CD8-positive, alpha-beta memory T cell (primary cell): ENCODE measurements at regions of chr22 and their contacts with region 1.

Region 1: GRCh38 chr22:41925655-41926460 is 748 bp downstream of the TNFRSF13C start:
- DNase-seq: peak; percentile 75 to 86 (median 78)
- H3K4me3 ChIP-seq: peak overlapping the region; percentile 34
- H3K4me3 Mint-ChIP-seq: peak overlapping the region; percentile 82 to 91 (median 85)
- H3K27ac ChIP-seq: no peak overlapping the region
- H3K27ac Mint-ChIP-seq: peak overlapping the region in 6 of 8 donors; percentile 65 to 87 (median 78)
- H3K4me1 ChIP-seq: peaks cover 10% of the 10 kb centered on the region
- H3K4me1 Mint-ChIP-seq: peaks cover 4 to 34% (median 9%) of the 10 kb centered on the region in 3 donors
- H3K27me3 ChIP-seq: no peaks in the 10 kb centered on the region
- H3K27me3 Mint-ChIP-seq: peaks cover 3 to 6% of the 10 kb centered on the region in 2 donors

Region 2: GRCh38 chr22:41910050-41911000 is 15.5 kb before region 1 on chr22:
- CTCF ChIA-PET with region 1: interaction called, 18 read pairs
- POLR2A ChIA-PET with region 1: interaction called, 5 read pairs
- DNase-seq: peak in 4 of 5 donors; percentile 14 to 62 (median 36)
- H3K4me3 ChIP-seq: no peak overlapping the region
- H3K4me3 Mint-ChIP-seq: peak overlapping the region in 6 of 7 donors; percentile 40 to 71 (median 50)
- H3K27ac ChIP-seq: no peak overlapping the region
- H3K27ac Mint-ChIP-seq: peak overlapping the region in 2 of 8 donors; percentile 38 to 65
- H3K4me1 ChIP-seq: peaks cover 30% of the 10 kb centered on the region
- H3K4me1 Mint-ChIP-seq: peaks cover 23 to 39% (median 27%) of the 10 kb centered on the region in 3 donors
- H3K27me3 ChIP-seq: peaks cover 36% of the 10 kb centered on the region
- H3K27me3 Mint-ChIP-seq: peaks cover 15 to 24% of the 10 kb centered on the region in 2 donors

Region 3: GRCh38 chr22:41963453-41964111 is 37.7 kb after region 1 on chr22:
- CTCF ChIA-PET with region 1: no interaction called
- POLR2A ChIA-PET with region 1: no interaction called
- DNase-seq: no peak
- H3K4me3 ChIP-seq: no peak overlapping the region
- H3K4me3 Mint-ChIP-seq: no peak overlapping the region
- H3K27ac ChIP-seq: no peak overlapping the region
- H3K27ac Mint-ChIP-seq: peak overlapping the region in 2 of 8 donors; percentile 6 to 17
- H3K4me1 ChIP-seq: no peaks in the 10 kb centered on the region
- H3K4me1 Mint-ChIP-seq: no peaks in the 10 kb centered on the region
- H3K27me3 ChIP-seq: no peaks in the 10 kb centered on the region
- H3K27me3 Mint-ChIP-seq: peaks cover 0 to 3% of the 10 kb centered on the region in 2 donors